Left ventricle myocardium inferior (tissue), 1 donor: ENCODE measurements at regions of chr16 and their contacts with region 1.

Region 1: DNA sequence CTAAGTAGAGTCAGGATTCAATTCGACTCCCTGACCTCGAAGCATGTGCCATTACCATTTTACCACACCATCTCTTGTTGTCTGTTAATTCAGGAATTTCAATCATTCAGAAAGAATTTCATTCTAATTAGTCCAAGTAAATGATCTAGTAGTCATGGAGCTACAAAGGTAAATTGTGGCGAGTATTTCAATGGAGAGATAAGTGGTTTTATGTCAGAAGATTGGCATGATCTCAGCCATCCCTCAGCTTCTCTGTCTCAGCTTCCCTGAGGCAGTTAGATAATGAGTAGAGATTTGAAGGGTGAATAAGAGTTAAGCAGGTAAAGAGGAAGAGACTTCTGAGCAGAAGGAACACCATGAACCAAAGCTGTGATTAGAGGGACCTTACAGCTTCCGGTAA is 93.6 kb downstream of the HS3ST4 start:
- DNase-seq: no peak
- H3K4me3 ChIP-seq: no peak overlapping the region
- H3K27ac ChIP-seq: no peak overlapping the region
- H3K4me1 ChIP-seq: no peaks in the 10 kb centered on the region
- H3K27me3 ChIP-seq: no peaks in the 10 kb centered on the region
- CTCF ChIP-seq: no peak

Region 2: DNA sequence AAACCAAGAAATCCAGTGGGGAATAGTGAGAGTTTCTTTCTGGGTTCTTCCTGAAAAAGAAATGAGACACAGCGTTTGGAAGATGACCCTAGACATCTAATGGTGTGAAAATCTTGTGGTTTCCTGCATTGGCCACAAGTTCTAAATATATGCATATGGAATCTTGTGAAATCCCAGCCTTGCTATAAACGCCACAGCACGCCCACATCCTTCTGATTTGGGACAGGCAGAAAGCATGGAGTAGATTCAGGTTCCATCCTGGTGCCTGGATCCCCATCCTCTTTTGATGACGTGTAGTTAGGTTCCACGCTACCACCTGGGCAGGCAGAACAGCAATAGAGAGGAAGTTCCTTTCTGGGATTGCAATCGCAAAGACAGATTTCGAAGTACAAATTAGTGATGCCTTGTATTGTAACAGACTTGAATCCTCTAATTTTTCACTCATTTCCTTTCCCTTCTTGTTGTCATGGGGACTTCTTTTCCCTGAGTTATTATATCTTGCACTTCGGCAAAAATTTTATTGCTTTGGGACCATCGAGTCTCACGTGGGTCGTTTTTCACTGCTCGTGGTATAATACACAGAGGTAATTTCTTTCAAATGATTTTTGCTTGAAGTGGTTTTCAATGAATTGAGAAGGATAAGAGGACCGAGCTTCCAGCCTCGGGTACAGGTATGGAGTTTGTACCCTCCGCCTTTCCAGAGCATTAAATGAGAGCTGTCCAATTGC is 56.0 kb before region 1 on chr16:
- intact Hi-C with region 1: loop called (anchors 10 kb)
- DNase-seq: no peak
- H3K4me3 ChIP-seq: no peak overlapping the region
- H3K27ac ChIP-seq: no peak overlapping the region
- H3K4me1 ChIP-seq: no peaks in the 10 kb centered on the region
- H3K27me3 ChIP-seq: peaks cover 13% of the 10 kb centered on the region
- CTCF ChIP-seq: no peak

Region 3: DNA sequence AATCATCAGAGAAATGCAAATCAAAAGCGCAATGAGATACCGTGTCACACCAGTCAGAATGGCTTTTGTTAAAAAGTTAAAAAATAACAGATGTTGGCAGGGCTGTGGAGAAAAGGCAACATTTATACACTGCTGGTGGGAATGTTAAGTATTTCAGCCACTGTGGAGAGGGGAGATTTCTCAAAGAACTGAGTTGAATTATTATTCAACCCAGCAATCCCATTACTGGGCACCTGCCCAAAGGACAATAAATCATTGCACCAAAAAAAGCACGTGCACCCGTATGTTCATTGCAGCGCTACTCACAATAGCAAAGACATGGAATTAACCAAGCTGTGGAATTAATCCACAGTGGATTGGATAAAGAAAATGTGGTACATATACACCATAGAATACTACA is 111.1 kb after region 1 on chr16:
- intact Hi-C with region 1: no loop called
- DNase-seq: no peak
- H3K4me3 ChIP-seq: no peak overlapping the region
- H3K27ac ChIP-seq: no peak overlapping the region
- H3K4me1 ChIP-seq: no peaks in the 10 kb centered on the region
- H3K27me3 ChIP-seq: peaks cover 52% of the 10 kb centered on the region
- CTCF ChIP-seq: no peak

Region 4: GRCh38 chr16:26102369-26102768 is 317.0 kb after region 1 on chr16:
- intact Hi-C with region 1: no loop called
- DNase-seq: no peak
- H3K4me3 ChIP-seq: no peak overlapping the region
- H3K27ac ChIP-seq: no peak overlapping the region
- H3K4me1 ChIP-seq: no peaks in the 10 kb centered on the region
- H3K27me3 ChIP-seq: no peaks in the 10 kb centered on the region
- CTCF ChIP-seq: no peak